Dorsolateral prefrontal cortex (tissue), 120 donors: ENCODE measurements at regions of chr10 and their contacts with region 1.

Region 1: GRCh38 chr10:17578603-17579002 is 38.6 kb downstream of the HACD1 start:
- DNase-seq: no peak
- H3K4me3 ChIP-seq: no peak overlapping the region
- H3K27ac ChIP-seq: no peak overlapping the region
- H3K27me3 ChIP-seq: no peaks in the 10 kb centered on the region
- CTCF ChIP-seq: no peak

Region 2: GRCh38 chr10:16975188-16975587 is 603.4 kb before region 1 on chr10:
- intact Hi-C with region 1: loop called in 1 of 2 experiments (anchors 10 kb)
- DNase-seq: no peak
- H3K4me3 ChIP-seq: no peak overlapping the region
- H3K27ac ChIP-seq: no peak overlapping the region
- H3K27me3 ChIP-seq: no peaks in the 10 kb centered on the region
- CTCF ChIP-seq: no peak